Left cardiac atrium (tissue), 4 donors: ENCODE measurements at regions of chr17 and their contacts with region 1.

Region 1: DNA sequence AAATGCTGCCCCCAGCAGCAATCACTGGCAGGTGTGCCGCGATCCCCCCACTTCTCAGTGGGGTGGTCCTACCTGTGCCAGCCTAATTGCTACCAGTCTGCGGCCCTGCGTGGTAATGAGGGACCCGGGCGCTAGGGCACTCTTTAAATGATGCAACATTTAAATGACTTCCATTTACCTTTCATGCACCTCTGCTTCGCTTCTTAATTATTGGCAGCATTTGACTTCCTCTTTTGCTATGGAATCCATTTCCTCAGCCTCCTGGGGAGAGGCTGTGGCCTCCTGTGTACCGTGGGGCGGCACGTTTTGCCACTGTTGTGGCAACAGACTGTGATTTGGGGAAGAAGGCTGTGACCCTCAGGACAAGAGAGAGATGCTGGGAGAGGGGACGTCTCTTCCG is 86.1 kb downstream of the RPA1 start:
- DNase-seq: no peak
- ATAC-seq: no peak

Region 2: GRCh38 chr17:1813088-1813487 is 102.8 kb before region 1 on chr17:
- intact Hi-C with region 1: no loop called
- DNase-seq: no peak
- ATAC-seq: peak in 1 of 2 donors; percentile 89

Region 3: DNA sequence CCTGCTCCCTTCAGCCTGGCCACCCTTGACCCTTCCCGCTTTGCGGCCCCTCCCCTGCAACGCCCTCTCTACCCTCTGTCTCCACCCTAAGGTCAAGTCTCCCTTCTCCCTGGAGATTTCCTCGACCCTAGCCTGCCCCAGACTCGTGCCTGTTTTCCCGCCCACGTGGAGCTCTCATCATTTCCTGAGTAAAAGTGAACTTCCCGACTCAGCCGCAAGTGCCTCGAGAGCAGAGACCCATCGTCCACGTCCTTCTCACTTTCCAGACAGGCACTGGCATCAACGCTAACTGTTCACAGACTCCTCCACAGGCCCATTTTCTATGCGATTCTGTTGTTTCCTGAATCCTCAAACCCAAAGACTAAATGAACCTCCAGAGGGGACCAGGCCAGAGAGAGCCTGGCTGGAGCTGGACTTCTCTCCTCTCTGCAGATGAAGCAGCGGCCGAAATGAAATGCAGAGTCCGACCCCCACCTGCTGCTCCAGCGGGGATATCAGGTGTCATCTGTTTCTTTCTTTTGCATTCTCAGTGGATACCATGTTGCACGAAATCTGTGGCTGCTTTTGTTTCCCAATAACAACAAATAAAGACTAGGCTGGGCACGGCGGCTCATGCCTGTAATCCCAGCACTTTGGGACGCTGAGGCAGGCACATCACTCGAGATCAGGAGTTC is 56.7 kb after region 1 on chr17:
- intact Hi-C with region 1: no loop called
- DNase-seq: peak; percentile 39
- ATAC-seq: peak in 1 of 2 donors; percentile 10

Region 4: GRCh38 chr17:2282297-2282873 is 366.5 kb after region 1 on chr17:
- intact Hi-C with region 1: loop called in 1 of 2 experiments (anchors 10 kb)
- DNase-seq: no peak
- ATAC-seq: peak; percentile 38 to 59